Ovary (tissue), 10 donors: ENCODE measurements at regions of chr15 and their contacts with region 1.

Region 1: DNA sequence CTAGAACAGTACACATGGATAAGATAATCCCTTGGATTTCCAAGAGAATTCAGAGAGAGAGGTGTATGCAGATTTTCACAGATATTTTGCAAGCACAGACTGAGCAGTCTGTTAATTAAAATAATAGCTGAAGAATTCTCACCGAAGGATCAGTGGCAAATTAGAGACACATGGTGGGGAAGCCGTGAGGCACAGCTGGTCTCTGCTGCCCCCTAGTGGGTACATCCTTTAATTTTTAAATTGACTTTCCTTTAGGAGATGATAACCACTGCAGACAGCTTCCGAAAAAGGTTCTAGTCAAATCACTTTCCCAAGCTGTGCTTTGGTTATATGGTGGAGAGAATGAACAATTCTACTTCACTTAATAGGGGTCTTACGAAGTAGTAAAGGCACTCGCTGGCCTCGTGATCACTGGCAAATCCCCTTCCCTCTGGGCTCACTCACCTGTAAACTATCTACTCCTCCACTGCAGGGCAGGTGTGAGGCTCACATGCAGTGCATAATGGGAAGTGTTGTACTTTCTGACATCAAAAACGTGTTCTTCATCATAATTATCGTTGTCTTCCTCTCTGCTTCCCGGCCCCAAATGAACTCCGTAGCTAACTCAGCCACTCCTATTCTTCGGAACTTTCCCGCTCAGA is 19.5 kb downstream of the MESD start:
- DNase-seq: peak; percentile 55 to 71 (median 69)
- H3K4me3 ChIP-seq: no peak overlapping the region
- H3K27ac ChIP-seq: no peak overlapping the region
- H3K4me1 ChIP-seq: peaks cover 5% of the 10 kb centered on the region
- H3K27me3 ChIP-seq: no peaks in the 10 kb centered on the region
- CTCF ChIP-seq: peak; percentile 55 to 96 (median 88)
- EP300 ChIP-seq: no peak
- POLR2A ChIP-seq: no peak

Region 2: DNA sequence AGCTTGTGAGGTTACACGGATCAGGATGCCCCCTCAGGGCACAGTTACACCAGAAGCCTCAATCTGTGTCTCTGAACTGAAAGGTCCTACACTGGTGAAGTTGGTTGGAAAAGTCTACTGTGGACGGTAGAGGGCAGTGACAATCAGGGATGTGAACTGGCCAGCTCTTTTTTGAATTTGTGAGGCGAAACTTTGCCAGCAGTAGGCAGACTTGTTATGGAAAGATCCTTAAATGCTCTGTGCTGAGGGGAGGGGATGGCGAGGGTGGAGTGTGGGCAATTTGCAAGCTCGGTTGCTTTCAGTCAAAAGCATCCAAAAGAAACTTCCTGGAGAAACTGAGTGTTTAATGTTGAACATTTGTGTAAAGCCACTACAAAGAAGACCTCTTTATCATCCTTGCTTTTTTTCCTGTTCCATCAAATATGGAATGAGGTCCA is 402.4 kb before region 1 on chr15:
- intact Hi-C with region 1: loop called in 3 of 4 experiments (anchors 5 to 10 kb)
- DNase-seq: peak in 4 of 5 donors; percentile 45 to 65 (median 50)
- H3K4me3 ChIP-seq: no peak overlapping the region
- H3K27ac ChIP-seq: no peak overlapping the region
- H3K4me1 ChIP-seq: no peaks in the 10 kb centered on the region
- H3K27me3 ChIP-seq: no peaks in the 10 kb centered on the region
- CTCF ChIP-seq: peak; percentile 50 to 66 (median 56)
- EP300 ChIP-seq: no peak
- POLR2A ChIP-seq: no peak

Region 3: GRCh38 chr15:80776420-80777045 is 193.6 kb before region 1 on chr15:
- intact Hi-C with region 1: loop called (anchors 5 to 10 kb)
- DNase-seq: peak; percentile 62 to 69 (median 65)
- H3K4me3 ChIP-seq: no peak overlapping the region
- H3K27ac ChIP-seq: no peak overlapping the region
- H3K4me1 ChIP-seq: peaks cover 15% of the 10 kb centered on the region
- H3K27me3 ChIP-seq: no peaks in the 10 kb centered on the region
- CTCF ChIP-seq: peak; percentile 54 to 59 (median 56)
- EP300 ChIP-seq: no peak
- POLR2A ChIP-seq: no peak